Endothelial cell of umbilical vein (primary cell): ENCODE measurements at regions of chr2 and their contacts with region 1.

Region 1: GRCh38 chr2:43131024-43131889 is 95.1 kb downstream of the ZFP36L2 start:
- DNase-seq: peak; percentile 82
- H3K4me3 ChIP-seq: no peak overlapping the region
- H3K27ac ChIP-seq: peak overlapping the region; percentile 38
- H3K4me1 ChIP-seq: peaks cover 15% of the 10 kb centered on the region
- H3K27me3 ChIP-seq: no peaks in the 10 kb centered on the region
- CTCF ChIP-seq: peak; percentile 52 to 58
- POLR2A ChIP-seq: no peak

Region 2: GRCh38 chr2:42859006-42859552 is 272.2 kb before region 1 on chr2:
- CTCF ChIA-PET with region 1: interaction called, 3 read pairs
- POLR2A ChIA-PET with region 1: no interaction called
- dilution Hi-C with region 1: no loop called
- intact Hi-C with region 1: loop called (anchors 2 kb)
- DNase-seq: peak; percentile 90
- H3K4me3 ChIP-seq: no peak overlapping the region
- H3K27ac ChIP-seq: no peak overlapping the region
- H3K4me1 ChIP-seq: peaks cover 19% of the 10 kb centered on the region
- H3K27me3 ChIP-seq: no peaks in the 10 kb centered on the region
- CTCF ChIP-seq: peak; percentile 75 to 78
- POLR2A ChIP-seq: no peak

Region 3: GRCh38 chr2:42922790-42923579 is 208.3 kb before region 1 on chr2:
- CTCF ChIA-PET with region 1: no interaction called
- POLR2A ChIA-PET with region 1: no interaction called
- dilution Hi-C with region 1: no loop called
- intact Hi-C with region 1: no loop called
- DNase-seq: no peak
- H3K4me3 ChIP-seq: no peak overlapping the region
- H3K27ac ChIP-seq: peak overlapping the region; percentile 91
- H3K4me1 ChIP-seq: peaks cover 52% of the 10 kb centered on the region
- H3K27me3 ChIP-seq: no peaks in the 10 kb centered on the region
- CTCF ChIP-seq: no peak
- POLR2A ChIP-seq: no peak

Region 4: GRCh38 chr2:42954227-42954962 is 176.9 kb before region 1 on chr2:
- CTCF ChIA-PET with region 1: no interaction called
- POLR2A ChIA-PET with region 1: no interaction called
- dilution Hi-C with region 1: no loop called
- intact Hi-C with region 1: loop called (anchors 1 kb)
- DNase-seq: no peak
- H3K4me3 ChIP-seq: no peak overlapping the region
- H3K27ac ChIP-seq: peak overlapping the region; percentile 65
- H3K4me1 ChIP-seq: peaks cover 30% of the 10 kb centered on the region
- H3K27me3 ChIP-seq: no peaks in the 10 kb centered on the region
- CTCF ChIP-seq: no peak
- POLR2A ChIP-seq: no peak

Region 5: DNA sequence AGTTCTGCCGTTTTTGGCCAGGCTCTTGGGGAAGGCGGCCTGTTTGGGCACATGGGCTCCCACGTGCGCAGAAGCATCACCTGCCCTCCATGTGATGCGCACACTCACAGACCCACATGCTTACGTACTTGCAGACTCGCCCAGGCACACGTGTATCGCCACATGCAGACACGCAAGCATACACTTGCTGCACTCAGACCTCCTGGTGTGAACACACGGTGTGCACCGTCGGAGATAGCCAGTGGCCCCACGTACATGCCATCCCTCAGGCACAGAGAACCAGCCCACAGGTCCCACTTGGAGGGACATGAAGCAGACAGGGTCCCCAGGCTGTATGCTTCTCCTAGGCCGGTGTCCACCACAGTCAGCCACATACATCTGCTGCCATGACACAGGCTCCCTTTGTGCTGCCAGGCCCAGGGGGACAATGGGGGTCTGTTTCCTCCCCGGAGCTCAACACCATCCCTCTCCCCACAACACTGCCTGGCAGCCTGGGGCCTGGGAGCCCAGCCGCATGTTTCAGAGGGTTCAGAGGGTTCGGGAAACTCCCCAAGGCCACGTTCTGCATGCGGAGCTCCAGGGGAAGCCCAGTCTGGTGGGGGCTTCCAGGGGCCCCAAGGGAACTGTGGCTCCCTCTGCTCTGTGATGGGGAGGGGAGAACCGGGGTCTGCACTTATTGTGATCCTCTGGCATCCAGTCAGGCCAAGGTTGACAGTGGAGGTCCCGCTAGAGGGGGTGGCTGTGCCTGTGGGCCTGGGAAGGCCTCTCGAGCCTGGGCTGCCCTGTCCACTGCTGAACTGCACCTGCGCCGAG is 130.8 kb before region 1 on chr2:
- CTCF ChIA-PET with region 1: no interaction called
- POLR2A ChIA-PET with region 1: no interaction called
- dilution Hi-C with region 1: no loop called
- intact Hi-C with region 1: no loop called
- DNase-seq: no peak
- H3K4me3 ChIP-seq: no peak overlapping the region
- H3K27ac ChIP-seq: no peak overlapping the region
- H3K4me1 ChIP-seq: no peaks in the 10 kb centered on the region
- H3K27me3 ChIP-seq: no peaks in the 10 kb centered on the region
- CTCF ChIP-seq: no peak
- POLR2A ChIP-seq: no peak

Region 6: DNA sequence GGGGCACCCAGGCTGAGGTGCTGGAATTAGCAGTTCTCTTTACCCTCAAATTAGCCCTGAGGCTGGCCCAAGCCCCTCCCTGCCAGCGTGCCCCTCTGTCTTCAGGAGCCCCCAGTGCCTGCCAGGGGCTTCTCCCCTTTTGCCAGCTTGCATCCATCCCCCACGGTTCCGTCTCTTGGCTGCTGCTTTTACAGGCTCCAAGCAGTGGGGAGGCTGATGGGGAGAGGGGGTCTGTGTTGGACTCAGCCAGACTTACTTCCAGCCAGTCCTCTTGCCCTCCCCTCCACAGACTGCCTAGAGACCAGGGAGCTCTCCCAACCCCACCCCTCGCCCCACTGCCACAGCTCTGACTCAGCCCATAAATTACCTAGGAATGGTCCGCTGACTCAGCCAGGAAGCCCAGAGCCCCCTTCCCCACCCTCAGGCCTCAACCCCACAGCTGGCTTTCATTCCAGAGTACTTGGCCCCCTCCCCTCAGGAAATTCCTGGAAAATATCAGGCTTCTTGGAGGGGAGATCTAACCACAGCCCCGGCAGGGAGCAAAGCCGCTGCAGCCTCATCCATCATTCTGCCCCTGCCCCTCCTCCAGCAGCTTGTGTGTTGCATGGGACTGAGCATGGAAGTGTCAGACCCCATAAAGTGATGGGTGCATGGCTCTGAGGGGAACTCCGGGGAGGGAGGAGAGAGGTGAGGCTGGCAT is 89.4 kb before region 1 on chr2:
- CTCF ChIA-PET with region 1: interaction called, 3 read pairs
- POLR2A ChIA-PET with region 1: no interaction called
- dilution Hi-C with region 1: no loop called
- intact Hi-C with region 1: loop called (anchors 2 kb)
- DNase-seq: peak; percentile 98
- H3K4me3 ChIP-seq: no peak overlapping the region
- H3K27ac ChIP-seq: peak overlapping the region; percentile 45
- H3K4me1 ChIP-seq: peaks cover 42% of the 10 kb centered on the region
- H3K27me3 ChIP-seq: no peaks in the 10 kb centered on the region
- CTCF ChIP-seq: no peak
- POLR2A ChIP-seq: no peak

Region 7: DNA sequence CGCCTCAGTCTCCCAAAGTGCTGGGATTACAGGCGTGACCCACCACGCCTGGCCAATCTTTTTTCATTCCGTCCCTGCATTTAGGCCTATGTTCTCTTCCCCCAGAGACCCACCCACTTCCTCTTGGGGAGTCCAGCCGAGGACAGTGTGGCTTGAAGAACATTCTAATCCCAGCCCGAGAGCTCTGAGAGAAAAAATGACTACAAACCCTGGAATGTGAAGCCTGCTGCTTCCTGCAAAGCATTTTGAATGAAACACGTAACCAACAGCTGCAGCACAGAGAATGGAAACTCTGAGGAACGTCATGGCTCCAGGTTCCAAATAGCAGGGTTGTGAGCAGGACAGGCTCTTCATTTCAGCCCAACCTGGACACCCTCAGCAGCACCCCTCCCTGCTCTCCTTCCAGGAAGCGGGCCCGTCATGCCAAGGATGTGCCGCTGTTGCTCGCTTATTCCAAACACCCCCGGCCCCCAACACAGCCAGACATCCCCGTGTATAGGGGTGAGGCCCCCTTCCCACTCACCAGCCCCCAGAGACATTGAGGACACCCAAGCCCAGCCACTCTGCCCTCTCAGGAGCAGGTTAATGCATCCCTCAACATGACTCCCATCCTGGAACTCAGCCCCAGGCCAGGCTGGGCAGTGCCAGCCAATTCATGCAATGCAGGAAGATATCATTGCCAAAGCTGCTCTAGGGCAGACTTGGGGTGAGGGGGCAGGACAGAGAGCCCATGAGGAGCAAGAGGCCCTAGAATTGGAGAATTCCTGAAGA is 44.6 kb before region 1 on chr2:
- CTCF ChIA-PET with region 1: interaction called, 6 read pairs
- POLR2A ChIA-PET with region 1: no interaction called
- dilution Hi-C with region 1: no loop called
- intact Hi-C with region 1: loop called (anchors 2 kb)
- DNase-seq: peak; percentile 96
- H3K4me3 ChIP-seq: no peak overlapping the region
- H3K27ac ChIP-seq: peak overlapping the region; percentile 87
- H3K4me1 ChIP-seq: peaks cover 44% of the 10 kb centered on the region
- H3K27me3 ChIP-seq: no peaks in the 10 kb centered on the region
- CTCF ChIP-seq: no peak
- POLR2A ChIP-seq: peak; percentile 17

Region 8: DNA sequence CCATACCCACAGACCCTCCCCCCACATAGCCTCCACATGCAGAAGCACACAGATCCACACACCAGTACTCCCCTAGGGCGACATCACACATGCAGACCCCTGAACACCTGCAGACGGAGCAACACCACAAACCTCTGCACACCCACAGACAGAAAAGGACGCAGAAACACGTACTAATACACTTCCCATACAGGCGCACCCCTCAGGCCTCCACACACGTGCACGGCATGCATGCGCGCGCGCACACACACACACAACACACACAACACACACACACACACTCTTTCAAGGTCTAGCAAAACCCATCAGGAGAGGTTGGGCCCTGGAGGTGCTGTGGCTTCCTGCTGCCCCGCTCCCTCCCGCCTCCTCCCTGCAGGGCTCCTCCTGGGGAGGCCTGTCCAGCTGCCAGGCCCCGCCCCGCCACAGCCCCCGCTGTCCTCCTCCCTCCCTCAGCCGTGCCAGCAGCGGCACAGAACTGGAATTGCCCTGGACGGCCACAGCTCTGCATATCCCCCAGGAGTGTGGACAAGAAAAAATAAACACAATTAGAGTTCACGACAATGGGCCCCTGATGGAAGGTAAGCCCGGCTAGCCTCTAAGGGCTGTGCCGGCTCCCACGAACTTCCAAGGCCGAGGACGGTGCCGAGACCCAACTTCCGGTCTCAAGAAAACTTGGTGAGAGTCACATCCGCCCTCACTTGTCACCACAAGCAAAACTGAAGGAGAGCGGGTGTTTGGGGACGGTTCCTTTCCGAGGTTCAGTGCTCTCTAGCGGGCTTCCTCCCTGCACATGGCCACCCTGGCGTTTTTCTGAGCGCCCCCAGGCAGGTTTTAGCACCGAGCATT is 88.3 kb after region 1 on chr2:
- CTCF ChIA-PET with region 1: interaction called, 14 read pairs
- POLR2A ChIA-PET with region 1: no interaction called
- dilution Hi-C with region 1: no loop called
- intact Hi-C with region 1: loop called (anchors 1 kb)
- DNase-seq: peak; percentile 84
- H3K4me3 ChIP-seq: peak overlapping the region in 2 of 3 experiments; percentile 0 to 37
- H3K27ac ChIP-seq: peak overlapping the region; percentile 88
- H3K4me1 ChIP-seq: peaks cover 54% of the 10 kb centered on the region
- H3K27me3 ChIP-seq: no peaks in the 10 kb centered on the region
- CTCF ChIP-seq: no peak
- POLR2A ChIP-seq: peak; percentile 62

Region 9: GRCh38 chr2:43288417-43289305 is 157.4 kb after region 1 on chr2:
- CTCF ChIA-PET with region 1: no interaction called
- POLR2A ChIA-PET with region 1: no interaction called
- dilution Hi-C with region 1: no loop called
- intact Hi-C with region 1: no loop called
- DNase-seq: no peak
- H3K4me3 ChIP-seq: no peak overlapping the region
- H3K27ac ChIP-seq: no peak overlapping the region
- H3K4me1 ChIP-seq: peaks cover 5% of the 10 kb centered on the region
- H3K27me3 ChIP-seq: no peaks in the 10 kb centered on the region
- CTCF ChIP-seq: no peak
- POLR2A ChIP-seq: no peak

Region 10: GRCh38 chr2:43542285-43542937 is 411.2 kb after region 1 on chr2:
- CTCF ChIA-PET with region 1: interaction called, 3 read pairs
- POLR2A ChIA-PET with region 1: no interaction called
- dilution Hi-C with region 1: no loop called
- intact Hi-C with region 1: loop called (anchors 5 kb)
- DNase-seq: peak; percentile 66
- H3K4me3 ChIP-seq: no peak overlapping the region
- H3K27ac ChIP-seq: no peak overlapping the region
- H3K4me1 ChIP-seq: no peaks in the 10 kb centered on the region
- H3K27me3 ChIP-seq: no peaks in the 10 kb centered on the region
- CTCF ChIP-seq: peak in 1 of 2 donors; percentile 17
- POLR2A ChIP-seq: no peak

Region 11: GRCh38 chr2:43559391-43560230 is 428.4 kb after region 1 on chr2:
- CTCF ChIA-PET with region 1: no interaction called
- POLR2A ChIA-PET with region 1: no interaction called
- dilution Hi-C with region 1: no loop called
- intact Hi-C with region 1: no loop called
- DNase-seq: no peak
- H3K4me3 ChIP-seq: no peak overlapping the region
- H3K27ac ChIP-seq: no peak overlapping the region
- H3K4me1 ChIP-seq: no peaks in the 10 kb centered on the region
- H3K27me3 ChIP-seq: no peaks in the 10 kb centered on the region
- CTCF ChIP-seq: no peak
- POLR2A ChIP-seq: no peak